Heart right ventricle (tissue), 16 donors: ENCODE measurements at regions of chr11 and their contacts with region 1.

Region 1: DNA sequence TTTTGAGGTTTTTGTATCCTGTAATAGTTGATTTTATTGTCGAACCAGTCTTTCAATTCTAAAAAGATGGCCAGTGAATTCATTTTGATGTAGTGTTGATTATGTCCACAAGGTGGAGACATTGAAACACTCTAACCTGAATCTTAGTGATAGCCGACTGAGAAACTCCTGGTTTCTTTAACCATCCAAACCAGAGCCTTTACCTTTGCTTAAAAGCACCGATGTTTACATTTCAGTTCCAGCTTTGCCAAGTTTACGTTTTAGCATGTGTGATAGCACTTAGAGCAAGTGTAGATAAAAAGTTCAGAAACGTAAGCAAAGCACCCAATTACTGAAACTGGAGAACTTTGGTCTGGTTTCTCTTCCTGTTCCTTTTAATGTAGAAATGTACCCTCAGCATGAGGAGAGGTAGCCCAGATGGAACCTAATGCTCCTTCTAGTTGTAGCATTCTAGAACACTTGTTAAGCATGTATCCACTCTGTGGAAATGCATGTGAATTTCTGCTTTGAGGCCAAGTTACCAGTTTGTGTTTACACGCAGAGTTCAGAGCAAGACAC is 208.6 kb downstream of the DBX1 start:
- DNase-seq: peak in 1 of 2 donors; percentile 10
- ATAC-seq: peak in 3 of 8 donors; percentile 38 to 62 (median 55)
- H3K4me3 ChIP-seq: peak overlapping the region in 4 of 10 donors; percentile 18 to 29 (median 25)
- H3K27ac ChIP-seq: peak overlapping the region in 3 of 10 donors; percentile 3 to 48 (median 47)
- H3K4me1 ChIP-seq: peaks cover 7 to 52% (median 38%) of the 10 kb centered on the region in 9 donors
- H3K27me3 ChIP-seq: no peaks in the 10 kb centered on the region
- CTCF ChIP-seq: peak; percentile 60 to 80 (median 72)

Region 2: GRCh38 chr11:19460718-19461405 is 490.8 kb before region 1 on chr11:
- intact Hi-C with region 1: no loop called
- DNase-seq: peak; percentile 20 to 56
- ATAC-seq: peak in 5 of 8 donors; percentile 27 to 63 (median 49)
- H3K4me3 ChIP-seq: no peak overlapping the region
- H3K27ac ChIP-seq: no peak overlapping the region
- H3K4me1 ChIP-seq: peaks cover 0 to 9% (median 5%) of the 10 kb centered on the region in 9 donors
- H3K27me3 ChIP-seq: no peaks in the 10 kb centered on the region
- CTCF ChIP-seq: no peak

Region 3: DNA sequence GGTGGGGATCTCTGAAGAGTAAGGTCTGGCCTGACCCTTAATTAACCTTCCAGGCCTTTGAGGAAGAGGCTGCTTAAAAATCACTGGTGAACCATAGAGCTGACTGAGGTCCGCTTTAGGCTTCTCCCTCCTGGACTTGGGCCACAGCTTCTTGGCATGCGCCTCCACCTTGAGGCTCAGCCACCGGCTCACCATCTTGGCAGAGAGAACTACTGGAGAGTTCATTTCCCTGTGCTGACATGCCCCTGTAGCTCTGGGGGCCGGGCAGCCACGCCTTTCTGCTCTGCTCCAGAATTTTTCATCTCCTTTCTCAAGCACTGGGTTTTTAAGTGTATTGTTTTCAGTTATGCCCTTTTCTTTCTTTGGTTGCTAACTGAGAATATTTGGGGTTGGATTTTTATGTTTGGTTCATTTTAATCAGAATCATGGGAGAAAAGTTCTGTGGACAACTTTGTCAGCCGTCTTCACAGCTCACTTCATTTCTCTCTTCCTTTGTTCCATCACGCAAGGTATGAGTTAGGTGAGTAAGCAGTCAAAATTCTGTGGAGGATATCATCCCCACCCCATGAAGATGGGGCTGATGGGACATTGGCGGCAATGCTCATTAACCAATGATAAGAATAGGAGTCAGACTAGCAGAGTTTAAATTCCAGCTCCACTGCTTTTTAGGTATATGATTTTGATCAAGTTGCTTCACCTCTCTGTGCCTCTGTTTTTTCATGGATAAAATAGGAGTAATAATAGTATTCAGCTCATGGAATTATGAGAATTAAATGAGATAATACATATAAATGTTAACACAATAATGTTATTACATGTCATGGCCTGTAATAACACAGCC is 104.7 kb after region 1 on chr11:
- intact Hi-C with region 1: loop called in 1 of 10 experiments (anchors 5 kb)
- DNase-seq: peak in 1 of 2 donors; percentile 34
- ATAC-seq: peak in 2 of 8 donors; percentile 11 to 36
- H3K4me3 ChIP-seq: no peak overlapping the region
- H3K27ac ChIP-seq: peak overlapping the region in 7 of 10 donors; percentile 15 to 77 (median 68)
- H3K4me1 ChIP-seq: peaks cover 0 to 71% (median 29%) of the 10 kb centered on the region in 9 donors
- H3K27me3 ChIP-seq: no peaks in the 10 kb centered on the region
- CTCF ChIP-seq: no peak

Region 4: GRCh38 chr11:20110908-20111669 is 159.5 kb after region 1 on chr11:
- intact Hi-C with region 1: loop called in 9 of 10 experiments (anchors 1 to 5 kb)
- DNase-seq: peak in 1 of 2 donors; percentile 18
- ATAC-seq: peak in 7 of 8 donors; percentile 7 to 53 (median 32)
- H3K4me3 ChIP-seq: no peak overlapping the region
- H3K27ac ChIP-seq: peak overlapping the region in 7 of 10 donors; percentile 60 to 84 (median 76)
- H3K4me1 ChIP-seq: peaks cover 5 to 27% (median 24%) of the 10 kb centered on the region in 9 donors
- H3K27me3 ChIP-seq: no peaks in the 10 kb centered on the region
- CTCF ChIP-seq: peak; percentile 69 to 88 (median 84)

Region 5: GRCh38 chr11:20127671-20128527 is 176.3 kb after region 1 on chr11:
- intact Hi-C with region 1: loop called in 9 of 10 experiments (anchors 2 to 5 kb)
- DNase-seq: peak; percentile 71 to 76
- ATAC-seq: peak; percentile 69 to 85 (median 78)
- H3K4me3 ChIP-seq: no peak overlapping the region
- H3K27ac ChIP-seq: no peak overlapping the region
- H3K4me1 ChIP-seq: peaks cover 0 to 10% (median 7%) of the 10 kb centered on the region in 9 donors
- H3K27me3 ChIP-seq: peaks cover 0 to 17% (median 0%) of the 10 kb centered on the region in 7 donors
- CTCF ChIP-seq: peak; percentile 76 to 89 (median 84)

Region 6: GRCh38 chr11:20337526-20338154 is 386.0 kb after region 1 on chr11:
- intact Hi-C with region 1: loop called in 1 of 10 experiments (anchors 10 kb)
- DNase-seq: no peak
- ATAC-seq: no peak
- H3K4me3 ChIP-seq: no peak overlapping the region
- H3K27ac ChIP-seq: no peak overlapping the region
- H3K4me1 ChIP-seq: peaks cover 0 to 3% (median 0%) of the 10 kb centered on the region in 9 donors
- H3K27me3 ChIP-seq: peaks cover 0 to 65% (median 53%) of the 10 kb centered on the region in 7 donors
- CTCF ChIP-seq: peak in 7 of 9 donors; percentile 24 to 55 (median 35)

Region 7: DNA sequence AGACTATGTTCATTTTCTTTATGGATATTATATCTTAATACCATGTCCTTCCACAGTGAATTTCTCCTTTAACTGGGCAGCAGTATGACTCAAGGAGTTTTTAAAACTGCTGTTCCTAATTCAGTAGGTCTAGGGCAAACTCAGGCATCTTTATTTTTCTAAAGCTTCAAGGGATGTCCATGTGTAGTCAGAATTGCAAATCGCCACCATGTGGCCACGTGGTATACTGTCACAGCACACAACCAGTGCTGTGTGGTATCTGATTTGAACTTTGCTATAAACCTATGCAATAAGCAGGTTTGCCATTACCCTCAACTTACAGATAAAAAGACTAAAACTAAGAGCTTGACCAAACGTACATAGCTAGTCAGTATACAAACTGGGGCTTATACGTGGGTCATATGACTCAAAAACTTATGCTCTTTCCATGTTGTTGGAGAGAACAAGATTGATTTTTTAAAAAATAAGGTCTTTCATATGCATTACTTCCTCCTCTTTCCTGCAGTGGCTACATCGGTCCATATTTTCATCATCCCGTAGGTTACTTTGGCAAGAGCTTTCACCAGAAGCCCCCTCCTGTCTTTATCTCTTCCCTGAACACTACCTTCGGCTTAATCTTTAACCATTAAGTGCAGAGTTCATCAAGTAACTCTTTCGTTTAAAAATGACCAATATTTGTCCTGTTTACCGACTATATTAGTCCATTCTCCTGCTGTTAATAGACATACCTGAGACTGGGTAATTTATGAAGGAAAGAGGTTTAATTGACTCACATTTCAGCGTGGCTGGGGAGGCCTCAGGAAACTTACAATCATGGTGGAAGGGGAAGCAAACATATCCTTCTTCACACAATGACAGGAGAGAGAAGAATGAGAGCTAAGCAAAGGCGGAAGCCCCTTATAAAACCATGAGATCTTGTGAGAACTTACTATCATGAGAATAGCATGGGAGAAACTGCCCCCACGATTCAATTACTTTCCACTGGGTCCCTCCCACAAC is 403.9 kb after region 1 on chr11:
- intact Hi-C with region 1: loop called in 7 of 10 experiments (anchors 5 to 10 kb)
- DNase-seq: no peak
- ATAC-seq: peak in 3 of 8 donors; percentile 54 to 72 (median 63)
- H3K4me3 ChIP-seq: no peak overlapping the region
- H3K27ac ChIP-seq: no peak overlapping the region
- H3K4me1 ChIP-seq: peaks cover 0 to 14% (median 0%) of the 10 kb centered on the region in 9 donors
- H3K27me3 ChIP-seq: peaks cover 0 to 17% (median 0%) of the 10 kb centered on the region in 7 donors
- CTCF ChIP-seq: peak; percentile 13 to 58 (median 50)

Region 8: DNA sequence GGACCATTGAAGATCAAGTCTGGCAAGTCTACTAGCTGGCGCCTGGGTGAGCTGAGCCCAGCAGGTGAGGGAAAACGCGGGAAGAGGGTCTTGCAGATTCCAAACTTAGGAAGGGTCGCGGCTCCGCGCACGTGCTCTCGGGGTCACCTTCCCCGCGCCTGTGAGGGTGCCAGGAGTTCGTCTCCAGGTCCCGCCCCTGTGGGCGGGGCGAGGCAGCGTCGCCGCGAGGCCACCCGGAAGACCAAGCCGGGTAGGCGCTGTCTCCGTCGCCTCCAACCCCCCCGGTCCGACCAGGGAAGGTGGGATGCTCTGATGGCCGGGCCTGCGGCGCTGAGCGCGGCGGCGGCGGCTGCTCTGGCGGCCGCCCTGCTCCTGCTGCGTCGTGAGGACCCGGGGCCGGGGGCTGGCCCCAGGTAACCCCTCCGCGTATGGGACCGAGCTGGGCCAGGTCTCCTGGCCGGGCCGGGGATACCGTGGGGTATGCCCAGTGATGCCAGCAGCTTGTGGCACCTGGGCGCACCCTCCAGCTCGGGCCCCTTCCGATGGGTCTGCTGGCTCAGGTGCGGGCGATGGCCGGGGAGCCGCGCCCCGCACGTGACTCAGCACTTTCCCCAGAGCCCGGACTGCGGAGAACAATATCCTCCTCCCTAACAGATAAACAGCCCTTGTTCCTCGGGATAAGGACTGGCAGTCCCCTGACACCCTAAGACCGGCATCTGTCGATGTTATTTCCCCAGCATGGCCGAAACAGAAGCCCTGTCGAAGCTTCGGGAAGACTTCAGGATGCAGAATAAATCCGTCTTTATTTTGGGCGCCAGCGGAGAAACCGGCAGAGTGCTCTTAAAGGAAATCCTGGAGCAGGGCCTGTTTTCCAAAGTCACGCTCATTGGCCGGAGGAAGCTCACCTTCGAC is 412.1 kb after region 1 on chr11 and contains the start of gene HTATIP2:
- intact Hi-C with region 1: loop called in 6 of 10 experiments (anchors 5 to 10 kb)
- DNase-seq: peak; percentile 54 to 75
- ATAC-seq: peak; percentile 83 to 92 (median 89)
- H3K4me3 ChIP-seq: peak within 1 kb of the TSS; percentile 61 to 94 (median 84)
- H3K27ac ChIP-seq: peak within 1 kb of the TSS; percentile 62 to 96 (median 86)
- H3K4me1 ChIP-seq: peaks cover 0 to 62% (median 14%) of the 10 kb centered on the region in 9 donors
- H3K27me3 ChIP-seq: peaks cover 0 to 6% (median 0%) of the 10 kb centered on the region in 7 donors
- CTCF ChIP-seq: no peak
- total RNA-seq, gene HTATIP2: 6.1 to 28.8 (median 14.1) TPM